Tibial artery (tissue), 4 donors: ENCODE measurements at regions of chr15 and their contacts with region 1.

Region 1: DNA sequence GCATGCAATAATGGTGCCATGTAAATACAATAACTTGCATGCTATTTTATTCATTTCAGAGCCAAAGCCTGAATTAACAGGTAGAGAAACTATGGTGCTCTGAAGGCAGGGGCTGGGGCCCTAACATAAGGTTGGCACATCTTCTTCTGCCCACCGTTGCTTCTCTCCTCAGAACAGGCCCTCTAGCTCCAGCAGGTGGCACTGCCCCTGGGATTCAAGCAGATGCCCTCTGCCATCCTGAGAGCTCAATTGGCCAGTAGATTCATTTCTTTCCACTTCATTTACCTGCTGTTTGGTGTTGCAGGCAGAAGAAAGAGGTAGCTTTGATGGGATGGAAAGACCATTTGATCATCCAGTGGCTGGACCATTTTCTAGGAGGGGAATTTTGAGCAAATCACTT is 130.5 kb downstream of the FOXB1 start:
- DNase-seq: no peak
- H3K4me3 ChIP-seq: no peak overlapping the region
- H3K27ac ChIP-seq: no peak overlapping the region
- H3K4me1 ChIP-seq: no peaks in the 10 kb centered on the region
- H3K27me3 ChIP-seq: peaks cover 0 to 15% of the 10 kb centered on the region in 2 donors
- CTCF ChIP-seq: no peak

Region 2: DNA sequence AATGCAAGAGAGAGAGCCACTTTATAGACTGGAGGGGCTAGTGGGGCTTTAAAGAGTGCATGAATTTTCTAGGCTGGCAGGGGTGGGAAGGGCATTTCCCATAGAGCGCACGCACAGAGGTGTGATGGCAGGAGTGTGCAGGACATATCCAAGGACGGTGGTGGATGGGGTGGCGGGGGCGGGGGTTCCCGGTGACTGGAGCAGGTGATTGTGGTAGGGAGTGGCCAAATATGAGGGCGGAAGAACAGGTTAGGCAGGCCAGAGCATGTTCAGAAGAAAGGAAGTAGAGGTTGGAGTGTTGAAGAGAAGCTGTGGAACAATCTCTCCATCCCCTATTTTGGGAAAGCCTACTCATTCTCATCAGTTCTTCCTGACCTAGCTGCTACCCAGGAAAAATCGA is 678.5 kb before region 1 on chr15:
- intact Hi-C with region 1: loop called (anchors 5 kb)
- DNase-seq: no peak
- H3K4me3 ChIP-seq: no peak overlapping the region
- H3K27ac ChIP-seq: no peak overlapping the region
- H3K4me1 ChIP-seq: no peaks in the 10 kb centered on the region
- H3K27me3 ChIP-seq: no peaks in the 10 kb centered on the region
- CTCF ChIP-seq: no peak